Esophagus squamous epithelium (tissue), 5 donors: ENCODE measurements at regions of chr5 and their contacts with region 1.

Region 1: DNA sequence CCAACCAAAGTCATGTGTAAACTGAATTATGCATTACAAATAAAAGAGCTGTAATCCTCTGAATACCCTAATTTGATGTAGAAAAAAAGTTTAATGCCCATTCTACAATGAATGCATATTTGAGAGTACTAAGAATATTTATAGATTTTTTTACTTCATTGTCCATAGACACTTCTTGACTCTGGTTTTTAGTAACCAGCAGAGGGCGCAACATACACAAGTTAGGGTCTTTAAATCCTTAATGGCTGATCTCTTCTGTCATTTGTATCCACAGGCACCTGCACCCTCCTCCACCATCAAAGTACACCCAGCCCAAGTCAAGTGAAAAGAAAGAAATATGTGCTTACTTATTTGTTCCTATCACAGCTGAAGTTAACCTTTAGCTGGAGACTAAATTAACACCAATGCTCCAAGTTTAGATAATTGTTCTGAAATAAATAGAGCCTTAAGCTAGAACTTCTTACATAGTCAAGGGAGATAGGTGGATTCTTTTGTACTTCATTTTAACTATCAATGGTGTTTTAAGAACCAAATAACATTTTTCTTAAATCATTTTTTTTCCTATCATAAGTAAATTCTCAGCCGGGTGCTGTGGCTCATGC is 524.2 kb upstream of the DAB2 start:
- DNase-seq: no peak
- H3K4me3 ChIP-seq: no peak overlapping the region
- H3K27ac ChIP-seq: no peak overlapping the region
- H3K4me1 ChIP-seq: no peaks in the 10 kb centered on the region
- H3K27me3 ChIP-seq: no peaks in the 10 kb centered on the region
- CTCF ChIP-seq: peak in 5 of 6 experiments; percentile 60 to 76 (median 69)
- POLR2A ChIP-seq: no peak

Region 2: GRCh38 chr5:39608024-39608423 is 340.9 kb before region 1 on chr5:
- intact Hi-C with region 1: no loop called
- DNase-seq: no peak
- H3K4me3 ChIP-seq: no peak overlapping the region
- H3K27ac ChIP-seq: no peak overlapping the region
- H3K4me1 ChIP-seq: no peaks in the 10 kb centered on the region
- H3K27me3 ChIP-seq: no peaks in the 10 kb centered on the region
- CTCF ChIP-seq: no peak
- POLR2A ChIP-seq: no peak

Region 3: DNA sequence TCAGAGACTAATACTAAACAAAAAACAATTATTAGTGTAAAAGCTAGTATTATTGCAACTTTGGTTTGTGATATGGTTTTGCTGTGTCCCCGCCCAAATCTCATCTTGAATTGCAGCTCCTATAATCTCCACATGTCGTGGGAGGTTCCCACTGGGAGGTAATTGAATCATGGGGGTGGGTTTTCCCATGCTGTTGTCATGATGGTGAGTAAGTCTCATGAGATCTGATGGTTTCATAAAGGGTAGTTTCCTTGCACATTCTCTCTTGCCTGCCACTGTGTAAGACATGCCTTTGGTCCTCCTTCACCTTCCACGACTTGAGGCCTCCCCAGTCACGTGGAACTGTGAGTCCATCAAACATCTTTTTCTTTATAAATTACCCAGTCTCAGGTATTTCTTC is 198.3 kb before region 1 on chr5:
- intact Hi-C with region 1: no loop called
- DNase-seq: no peak
- H3K4me3 ChIP-seq: no peak overlapping the region
- H3K27ac ChIP-seq: no peak overlapping the region
- H3K4me1 ChIP-seq: no peaks in the 10 kb centered on the region
- H3K27me3 ChIP-seq: no peaks in the 10 kb centered on the region
- CTCF ChIP-seq: no peak
- POLR2A ChIP-seq: no peak

Region 4: DNA sequence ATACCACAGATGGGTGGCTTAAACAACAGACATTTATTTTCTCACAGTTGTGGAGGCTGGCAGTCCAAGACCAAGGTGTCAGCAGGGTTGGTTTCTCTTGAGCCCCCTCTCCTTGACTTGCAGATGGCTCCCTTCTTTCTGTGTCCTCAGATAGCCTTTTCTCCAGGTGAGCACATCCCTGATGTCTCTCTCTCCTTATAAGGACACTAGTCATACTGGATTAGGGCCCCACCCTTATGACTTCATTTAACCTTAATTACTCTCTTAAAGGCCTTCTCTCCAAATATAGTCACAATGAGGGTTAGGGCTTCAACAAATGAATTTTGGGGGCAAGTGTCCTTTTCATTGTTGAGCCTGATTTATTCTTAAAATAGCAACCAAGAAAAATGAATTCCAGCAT is 745.5 kb after region 1 on chr5:
- intact Hi-C with region 1: loop called (anchors 10 kb)
- DNase-seq: no peak
- H3K4me3 ChIP-seq: no peak overlapping the region
- H3K27ac ChIP-seq: no peak overlapping the region
- H3K4me1 ChIP-seq: peaks cover 0 to 10% (median 0%) of the 10 kb centered on the region in 3 donors
- H3K27me3 ChIP-seq: no peaks in the 10 kb centered on the region
- CTCF ChIP-seq: no peak
- POLR2A ChIP-seq: no peak